ENCODE measurements at regions of chr17 and their contacts with region 1.

Region 1: GRCh38 chr17:21318439-21318838 is 33.9 kb downstream of the MAP2K3 start:
- DNase-seq: no peak
- ATAC-seq: no peak
- H3K4me3 ChIP-seq: no peak overlapping the region
- H3K27ac ChIP-seq: no peak overlapping the region
- H3K4me1 ChIP-seq: peaks cover 0 to 6% of the 10 kb centered on the region in 2 experiments; a peak in 2 of 5 replicates
- H3K27me3 ChIP-seq: peaks cover 0 to under 1% of the 10 kb centered on the region in 2 experiments; a peak in 2 of 5 replicates
- CTCF ChIP-seq: no peak
- EP300 ChIP-seq: no peak
- POLR2A ChIP-seq: no peak
- RAD21 ChIP-seq: no peak

Region 2: DNA sequence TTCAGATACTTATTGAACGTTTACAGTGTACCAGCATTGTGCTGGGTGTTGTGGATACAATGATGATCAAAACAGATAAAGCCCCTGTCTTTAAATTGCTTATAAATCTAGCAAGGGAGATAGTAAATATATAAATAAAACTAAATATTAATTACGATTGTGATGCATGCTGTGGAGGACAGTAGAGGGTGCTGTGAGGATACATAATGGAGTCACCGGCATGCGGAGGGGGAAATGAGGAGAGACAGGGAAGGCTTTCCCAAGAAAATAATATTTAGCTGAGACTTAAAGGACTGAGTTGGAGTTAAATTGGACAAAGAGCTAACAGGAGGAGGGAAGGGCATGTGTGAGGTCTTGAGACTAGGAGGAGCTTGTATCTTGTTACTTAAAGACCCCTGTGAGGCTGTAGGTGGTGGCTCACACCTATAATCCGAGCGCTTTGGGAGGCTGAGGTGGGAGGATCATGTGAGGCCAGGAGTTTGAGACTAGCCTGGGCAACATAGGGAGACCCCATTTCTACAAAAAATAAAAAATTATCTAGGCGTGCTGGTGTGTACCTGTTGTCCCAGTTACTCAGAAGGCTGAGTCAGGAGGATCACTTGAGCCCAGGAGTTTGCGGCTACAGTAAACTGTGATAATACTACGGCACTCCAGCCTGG is 189.3 kb before region 1 on chr17:
- CTCF ChIA-PET with region 1: no interaction called
- POLR2A ChIA-PET with region 1: no interaction called
- in situ Hi-C with region 1: no loop called
- intact Hi-C with region 1: no loop called
- DNase-seq: no peak
- ATAC-seq: no peak
- H3K4me3 ChIP-seq: no peak overlapping the region
- H3K27ac ChIP-seq: no peak overlapping the region
- H3K4me1 ChIP-seq: peaks cover 7 to 13% of the 10 kb centered on the region in 2 experiments; a peak in 3 of 5 replicates
- H3K27me3 ChIP-seq: no peaks in the 10 kb centered on the region
- CTCF ChIP-seq: peak; percentile 27 to 66 (median 41); a peak in 4 of 6 replicates
- EP300 ChIP-seq: no peak
- POLR2A ChIP-seq: no peak
- RAD21 ChIP-seq: peak; percentile 34 to 50

Region 3: GRCh38 chr17:21214015-21214776 is 104.2 kb before region 1 on chr17 and contains the start of gene TMEM11:
- CTCF ChIA-PET with region 1: no interaction called
- POLR2A ChIA-PET with region 1: no interaction called
- in situ Hi-C with region 1: no loop called
- intact Hi-C with region 1: no loop called
- DNase-seq: peak; percentile 88 to 93 (median 92)
- ATAC-seq: peak; percentile 94
- H3K4me3 ChIP-seq: peak within 1 kb of the TSS; percentile 96
- H3K27ac ChIP-seq: peak within 1 kb of the TSS; percentile 98
- H3K4me1 ChIP-seq: peaks cover 20 to 31% of the 10 kb centered on the region in 2 experiments; a peak in 4 of 5 replicates
- H3K27me3 ChIP-seq: no peaks in the 10 kb centered on the region
- CTCF ChIP-seq: peak in 1 of 3 experiments; percentile 1; a peak in 1 of 6 replicates
- EP300 ChIP-seq: no peak; the same call in 1 of the 2 replicates
- POLR2A ChIP-seq: peak; percentile 76
- RAD21 ChIP-seq: no peak
- polyA plus RNA-seq, gene TMEM11: 17.4 to 31.9 TPM

Region 4: GRCh38 chr17:21756856-21757619 is 438.6 kb after region 1 on chr17:
- CTCF ChIA-PET with region 1: no interaction called
- POLR2A ChIA-PET with region 1: no interaction called
- in situ Hi-C with region 1: loop called (anchors 5 kb)
- intact Hi-C with region 1: no loop called
- DNase-seq: no peak
- ATAC-seq: no peak
- H3K4me3 ChIP-seq: no peak overlapping the region
- H3K27ac ChIP-seq: no peak overlapping the region
- H3K4me1 ChIP-seq: no peaks in the 10 kb centered on the region
- H3K27me3 ChIP-seq: no peaks in the 10 kb centered on the region
- CTCF ChIP-seq: no peak
- EP300 ChIP-seq: no peak
- POLR2A ChIP-seq: no peak
- RAD21 ChIP-seq: no peak